B cell (primary cell): ENCODE measurements at regions of chr15 and their contacts with region 1.

Region 1: DNA sequence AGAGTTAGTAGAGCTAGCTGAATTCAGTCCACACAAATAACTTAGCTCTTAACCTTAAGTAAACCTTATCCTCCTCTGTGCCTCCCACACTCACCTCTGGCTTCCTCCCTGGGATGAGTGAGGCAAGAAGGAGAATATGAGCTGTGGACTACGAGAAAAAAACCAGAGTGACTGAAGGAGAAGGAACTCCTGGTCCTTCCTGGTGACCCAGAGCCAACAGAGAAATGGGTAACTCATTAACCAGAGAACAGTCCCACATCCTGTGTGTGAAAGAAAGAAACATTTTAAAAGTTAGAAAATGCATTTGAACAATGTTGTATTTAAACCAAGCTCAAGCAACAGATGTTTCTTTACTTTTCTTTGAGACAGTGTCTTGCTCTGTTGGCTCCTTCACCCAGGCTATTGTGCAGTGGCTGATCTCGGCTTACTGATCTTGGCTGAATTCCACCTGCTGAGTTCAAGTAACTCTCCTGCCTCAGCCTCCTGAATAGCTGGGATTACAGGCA is 27.5 kb upstream of the FAM81A start:
- DNase-seq: no peak
- ATAC-seq: no peak
- H3K4me3 ChIP-seq: no peak overlapping the region
- H3K4me3 Mint-ChIP-seq: peak overlapping the region; percentile 45
- H3K27ac ChIP-seq: peak overlapping the region; percentile 74 to 85
- H3K27ac Mint-ChIP-seq: peak overlapping the region; percentile 78
- H3K4me1 ChIP-seq: peaks cover 83 to 87% of the 10 kb centered on the region in 2 donors
- H3K4me1 Mint-ChIP-seq: peaks cover 81% of the 10 kb centered on the region
- H3K27me3 ChIP-seq: no peaks in the 10 kb centered on the region
- H3K27me3 Mint-ChIP-seq: no peaks in the 10 kb centered on the region
- CTCF ChIP-seq: no peak

Region 2: DNA sequence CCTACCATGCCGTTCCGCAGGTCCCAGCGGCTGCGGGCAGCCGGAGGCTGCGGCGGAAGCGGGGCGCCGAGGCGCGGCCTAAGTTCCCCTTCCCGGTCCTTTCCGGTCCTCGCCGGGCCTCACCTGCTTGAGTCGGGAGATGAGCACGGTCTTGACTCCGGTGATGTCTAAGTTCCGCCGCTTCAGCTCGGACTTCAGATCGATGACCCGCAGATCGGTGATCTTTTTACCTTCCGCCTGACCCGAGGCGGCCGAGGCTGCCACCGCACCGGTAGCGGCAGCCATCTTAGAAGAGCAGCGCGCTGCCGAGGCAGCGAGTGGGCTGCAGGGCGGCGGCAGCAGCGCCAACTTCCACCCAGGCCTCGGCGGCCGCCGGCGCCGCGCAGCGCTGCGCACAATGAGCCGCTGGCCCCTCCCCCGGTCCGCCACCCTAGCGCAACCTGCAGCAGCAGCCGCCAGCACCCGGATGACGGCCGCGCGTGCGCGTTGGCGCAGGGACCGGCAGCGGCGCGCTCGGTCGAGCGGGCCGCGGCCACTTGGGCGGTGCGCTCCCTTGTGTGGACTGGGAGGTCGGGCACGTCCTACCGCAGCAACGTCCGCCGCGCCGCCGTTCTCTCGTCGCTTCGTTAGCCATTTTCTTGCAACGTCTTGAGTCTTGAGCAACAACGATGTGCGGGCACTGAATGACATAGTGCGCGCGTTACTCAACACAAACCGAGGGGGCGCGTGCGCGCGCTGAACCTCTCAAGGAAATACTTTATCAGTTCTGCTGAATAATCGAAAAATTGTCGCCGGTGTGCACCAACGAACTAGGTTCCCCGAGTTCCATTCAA is 476.9 kb before region 1 on chr15 and contains the start of gene SLTM:
- CTCF ChIA-PET with region 1: no interaction called
- POLR2A ChIA-PET with region 1: no interaction called
- intact Hi-C with region 1: loop called (anchors 1 kb)
- DNase-seq: peak; percentile 98
- ATAC-seq: peak; percentile 91
- H3K4me3 ChIP-seq: peak within 1 kb of the TSS; percentile 80 to 97 (median 90)
- H3K4me3 Mint-ChIP-seq: peak within 1 kb of the TSS; percentile 95
- H3K27ac ChIP-seq: peak within 1 kb of the TSS; percentile 97 to 98
- H3K27ac Mint-ChIP-seq: peak within 1 kb of the TSS; percentile 97
- H3K4me1 ChIP-seq: peaks cover 19 to 20% of the 10 kb centered on the region in 2 donors
- H3K4me1 Mint-ChIP-seq: peaks cover 29% of the 10 kb centered on the region
- H3K27me3 ChIP-seq: no peaks in the 10 kb centered on the region
- H3K27me3 Mint-ChIP-seq: no peaks in the 10 kb centered on the region
- CTCF ChIP-seq: peak; percentile 42
- total RNA-seq, gene SLTM: 183 and 188 TPM in 2 replicates

Region 3: GRCh38 chr15:59174835-59175831 is 235.3 kb before region 1 on chr15:
- CTCF ChIA-PET with region 1: interaction called, 12 read pairs
- POLR2A ChIA-PET with region 1: no interaction called
- intact Hi-C with region 1: loop called (anchors 2 kb)
- DNase-seq: peak; percentile 57
- ATAC-seq: peak; percentile 94
- H3K4me3 ChIP-seq: no peak overlapping the region
- H3K4me3 Mint-ChIP-seq: no peak overlapping the region
- H3K27ac ChIP-seq: no peak overlapping the region
- H3K27ac Mint-ChIP-seq: no peak overlapping the region
- H3K4me1 ChIP-seq: no peaks in the 10 kb centered on the region
- H3K4me1 Mint-ChIP-seq: peaks cover 7% of the 10 kb centered on the region
- H3K27me3 ChIP-seq: no peaks in the 10 kb centered on the region
- H3K27me3 Mint-ChIP-seq: no peaks in the 10 kb centered on the region
- CTCF ChIP-seq: peak; percentile 55

Region 4: DNA sequence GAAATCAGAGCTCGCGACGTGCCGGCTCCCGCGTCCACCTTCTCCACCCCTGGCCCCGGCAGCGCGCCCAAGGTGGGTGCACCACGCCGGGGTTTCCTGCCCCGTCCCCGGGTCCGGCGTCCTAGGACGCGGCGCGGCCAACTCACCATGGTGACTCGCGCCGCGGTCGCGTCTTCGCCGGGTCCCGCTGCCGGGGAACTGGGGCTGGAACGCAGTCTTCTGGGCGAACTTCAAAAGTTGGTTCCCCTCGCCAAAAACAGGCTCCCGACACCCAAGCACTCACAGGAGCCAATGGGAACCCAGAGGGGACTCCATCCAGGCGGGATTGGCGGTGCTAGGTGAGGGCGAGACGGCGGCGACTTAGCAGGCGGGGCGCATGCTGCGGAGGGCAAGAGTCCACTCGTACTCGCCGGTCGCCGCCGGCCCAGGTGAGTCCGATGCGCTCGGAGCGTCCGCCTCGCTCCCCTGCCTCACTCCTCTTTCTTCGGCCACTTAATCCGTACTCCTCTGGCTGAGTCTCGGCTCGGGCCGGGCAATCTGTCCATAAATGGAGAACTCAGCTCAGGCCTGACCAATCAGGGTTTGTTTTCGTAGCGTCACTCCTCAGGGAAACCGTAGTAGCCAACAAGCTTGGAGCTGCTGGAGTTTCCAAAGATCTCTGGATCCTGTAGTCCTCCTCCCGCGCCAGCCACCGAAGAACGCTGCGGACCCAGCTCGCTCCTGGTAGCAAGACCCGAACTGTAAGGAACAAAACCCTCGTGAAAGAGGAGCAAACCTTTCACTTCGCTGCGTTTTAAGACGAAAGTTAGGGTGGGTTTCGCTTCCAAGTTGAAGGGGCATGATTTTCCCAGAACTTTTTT is 37.9 kb before region 1 on chr15 and contains the start of gene MYO1E:
- CTCF ChIA-PET with region 1: interaction called, 26 read pairs
- POLR2A ChIA-PET with region 1: no interaction called
- intact Hi-C with region 1: loop called (anchors 2 kb)
- DNase-seq: peak; percentile 73
- ATAC-seq: peak; percentile 62
- H3K4me3 ChIP-seq: peak within 1 kb of the TSS; percentile 63 to 98 (median 85)
- H3K4me3 Mint-ChIP-seq: peak within 1 kb of the TSS; percentile 99
- H3K27ac ChIP-seq: peak within 1 kb of the TSS; percentile 72 to 77
- H3K27ac Mint-ChIP-seq: peak within 1 kb of the TSS; percentile 94
- H3K4me1 ChIP-seq: peaks cover 35 to 37% of the 10 kb centered on the region in 2 donors
- H3K4me1 Mint-ChIP-seq: peaks cover 53% of the 10 kb centered on the region
- H3K27me3 ChIP-seq: no peaks in the 10 kb centered on the region
- H3K27me3 Mint-ChIP-seq: no peaks in the 10 kb centered on the region
- CTCF ChIP-seq: no peak
- total RNA-seq, gene MYO1E: 100.0 and 111 TPM in 2 replicates

Region 5: GRCh38 chr15:59437817-59438562 is 27.5 kb after region 1 on chr15 and contains the start of gene FAM81A:
- CTCF ChIA-PET with region 1: interaction called, 3 read pairs
- POLR2A ChIA-PET with region 1: interaction called, 4 read pairs
- intact Hi-C with region 1: loop called (anchors 1 kb)
- DNase-seq: peak; percentile 79
- ATAC-seq: peak; percentile 86
- H3K4me3 ChIP-seq: peak within 1 kb of the TSS; percentile 60 to 87 (median 71)
- H3K4me3 Mint-ChIP-seq: peak within 1 kb of the TSS; percentile 93
- H3K27ac ChIP-seq: no peak within 1 kb of the TSS
- H3K27ac Mint-ChIP-seq: peak within 1 kb of the TSS; percentile 80
- H3K4me1 ChIP-seq: peaks cover 22 to 30% of the 10 kb centered on the region in 2 donors
- H3K4me1 Mint-ChIP-seq: peaks cover 37% of the 10 kb centered on the region
- H3K27me3 ChIP-seq: peaks cover 0 to 4% (median 0%) of the 10 kb centered on the region in 4 experiments
- H3K27me3 Mint-ChIP-seq: peaks cover 5% of the 10 kb centered on the region
- CTCF ChIP-seq: no peak
- total RNA-seq, gene FAM81A: 3.8 and 3.9 TPM in 2 replicates

Region 6: GRCh38 chr15:59473226-59473625 is 62.8 kb after region 1 on chr15:
- CTCF ChIA-PET with region 1: no interaction called
- POLR2A ChIA-PET with region 1: no interaction called
- intact Hi-C with region 1: no loop called
- DNase-seq: no peak
- ATAC-seq: no peak
- H3K4me3 ChIP-seq: no peak overlapping the region
- H3K4me3 Mint-ChIP-seq: no peak overlapping the region
- H3K27ac ChIP-seq: no peak overlapping the region
- H3K27ac Mint-ChIP-seq: no peak overlapping the region
- H3K4me1 ChIP-seq: no peaks in the 10 kb centered on the region
- H3K4me1 Mint-ChIP-seq: peaks cover 10% of the 10 kb centered on the region
- H3K27me3 ChIP-seq: no peaks in the 10 kb centered on the region
- H3K27me3 Mint-ChIP-seq: no peaks in the 10 kb centered on the region
- CTCF ChIP-seq: no peak

Region 7: GRCh38 chr15:59516655-59517461 is 106.4 kb after region 1 on chr15:
- CTCF ChIA-PET with region 1: no interaction called
- POLR2A ChIA-PET with region 1: no interaction called
- intact Hi-C with region 1: loop called (anchors 5 kb)
- DNase-seq: peak; percentile 77
- ATAC-seq: peak; percentile 77
- H3K4me3 ChIP-seq: peak overlapping the region in 2 of 5 experiments; percentile 11 to 25
- H3K4me3 Mint-ChIP-seq: peak overlapping the region; percentile 70
- H3K27ac ChIP-seq: peak overlapping the region; percentile 93 to 94
- H3K27ac Mint-ChIP-seq: peak overlapping the region; percentile 95
- H3K4me1 ChIP-seq: peaks cover 63 to 68% of the 10 kb centered on the region in 2 donors
- H3K4me1 Mint-ChIP-seq: peaks cover 56% of the 10 kb centered on the region
- H3K27me3 ChIP-seq: no peaks in the 10 kb centered on the region
- H3K27me3 Mint-ChIP-seq: no peaks in the 10 kb centered on the region
- CTCF ChIP-seq: no peak